Right lobe of liver (tissue), 6 donors: ENCODE measurements at regions of chr10 and their contacts with region 1.

Region 1: DNA sequence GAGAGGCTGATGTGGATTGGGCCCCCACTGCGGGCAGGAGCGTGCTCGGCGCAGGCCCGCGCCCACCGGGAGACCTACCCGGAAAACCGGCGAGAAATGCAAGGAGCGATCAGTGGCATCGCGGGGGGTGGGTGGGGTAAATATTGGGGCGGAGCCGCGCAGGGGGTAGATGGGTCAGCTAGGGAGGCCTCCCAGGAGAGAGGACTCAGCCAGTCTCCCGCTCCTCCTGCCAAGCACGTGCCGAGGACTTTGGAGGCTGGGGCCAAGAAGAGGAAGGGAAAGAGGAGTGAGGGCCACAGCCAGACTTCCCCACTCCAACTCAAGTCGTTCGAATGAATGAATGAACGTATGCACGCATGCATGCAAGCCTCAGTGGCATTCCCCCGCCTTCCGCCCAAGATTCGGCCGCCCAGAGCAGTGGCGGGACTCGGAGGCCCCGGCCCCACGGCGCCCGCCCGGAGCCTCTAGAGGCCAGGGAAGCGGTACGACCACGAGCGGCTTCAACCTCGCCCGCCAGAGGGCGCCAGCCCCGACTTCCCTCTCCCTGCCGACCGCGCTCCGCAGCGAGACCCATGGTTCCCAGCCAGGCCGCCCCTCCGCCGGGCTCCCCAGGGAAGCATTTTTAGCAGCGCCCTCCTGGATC is 3.6 kb downstream of the NPM3 start:
- DNase-seq: peak; percentile 82 to 87 (median 87)
- ATAC-seq: peak; percentile 81 to 89 (median 82)
- H3K4me3 ChIP-seq: peak overlapping the region; percentile 24 to 40 (median 38)
- H3K27ac ChIP-seq: no peak overlapping the region
- H3K4me1 ChIP-seq: peaks cover 0 to 32% (median 9%) of the 10 kb centered on the region in 4 donors
- H3K27me3 ChIP-seq: peaks cover 0 to 7% of the 10 kb centered on the region in 2 donors
- CTCF ChIP-seq: peak; percentile 64 to 94 (median 94)
- POLR2A ChIP-seq: no peak

Region 2: GRCh38 chr10:101214446-101215396 is 564.9 kb before region 1 on chr10:
- intact Hi-C with region 1: loop called in 1 of 2 experiments (anchors 10 kb)
- DNase-seq: peak in 2 of 3 donors; percentile 58 to 65
- ATAC-seq: peak; percentile 57 to 77 (median 72)
- H3K4me3 ChIP-seq: no peak overlapping the region
- H3K27ac ChIP-seq: no peak overlapping the region
- H3K4me1 ChIP-seq: peaks cover 0 to 18% (median 0%) of the 10 kb centered on the region in 4 donors
- H3K27me3 ChIP-seq: peaks cover 31 to 49% of the 10 kb centered on the region in 2 donors
- CTCF ChIP-seq: peak; percentile 55 to 90 (median 85)
- POLR2A ChIP-seq: no peak

Region 3: DNA sequence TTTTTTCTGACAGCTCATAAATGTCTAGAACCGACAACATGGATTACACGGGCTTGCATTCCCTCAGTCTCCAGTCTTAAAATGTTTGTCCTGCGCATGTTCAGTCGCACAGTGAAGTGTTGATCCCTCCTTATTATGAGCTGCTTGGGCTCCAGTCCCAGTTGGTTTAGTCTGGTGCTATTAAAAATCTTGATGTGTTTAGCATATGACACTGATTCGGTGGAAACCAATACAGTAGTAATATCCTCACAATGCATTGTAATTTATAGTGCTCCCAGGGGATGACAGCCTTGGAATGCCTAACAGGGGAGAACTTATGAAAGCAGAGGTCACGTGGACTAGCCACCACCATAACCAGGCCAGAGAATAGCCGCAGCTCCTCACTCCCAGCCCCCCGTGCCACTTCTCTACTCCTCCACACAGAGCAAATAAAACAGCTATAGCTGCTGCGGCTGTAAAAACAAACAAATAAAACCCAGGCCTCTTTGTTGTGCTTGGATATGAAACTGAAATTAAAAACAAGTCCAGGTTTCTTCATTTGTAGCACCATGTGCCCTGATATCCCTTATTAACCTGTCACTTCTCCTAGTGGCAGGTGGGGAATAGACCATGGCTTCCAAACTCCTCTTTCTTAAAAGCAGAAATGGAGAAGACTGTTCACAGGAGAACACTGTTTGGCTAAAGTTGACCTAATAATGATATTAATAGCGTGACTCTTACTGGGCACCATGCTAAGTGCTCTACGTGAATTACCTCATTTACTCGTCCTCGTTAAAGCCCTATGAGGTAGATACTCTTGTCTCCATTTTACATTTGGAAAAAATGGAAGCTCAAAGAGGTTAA is 183.9 kb before region 1 on chr10:
- intact Hi-C with region 1: loop called (anchors 5 kb)
- DNase-seq: no peak
- ATAC-seq: no peak
- H3K4me3 ChIP-seq: no peak overlapping the region
- H3K27ac ChIP-seq: no peak overlapping the region
- H3K4me1 ChIP-seq: no peaks in the 10 kb centered on the region
- H3K27me3 ChIP-seq: no peaks in the 10 kb centered on the region
- CTCF ChIP-seq: no peak
- POLR2A ChIP-seq: no peak

Region 4: DNA sequence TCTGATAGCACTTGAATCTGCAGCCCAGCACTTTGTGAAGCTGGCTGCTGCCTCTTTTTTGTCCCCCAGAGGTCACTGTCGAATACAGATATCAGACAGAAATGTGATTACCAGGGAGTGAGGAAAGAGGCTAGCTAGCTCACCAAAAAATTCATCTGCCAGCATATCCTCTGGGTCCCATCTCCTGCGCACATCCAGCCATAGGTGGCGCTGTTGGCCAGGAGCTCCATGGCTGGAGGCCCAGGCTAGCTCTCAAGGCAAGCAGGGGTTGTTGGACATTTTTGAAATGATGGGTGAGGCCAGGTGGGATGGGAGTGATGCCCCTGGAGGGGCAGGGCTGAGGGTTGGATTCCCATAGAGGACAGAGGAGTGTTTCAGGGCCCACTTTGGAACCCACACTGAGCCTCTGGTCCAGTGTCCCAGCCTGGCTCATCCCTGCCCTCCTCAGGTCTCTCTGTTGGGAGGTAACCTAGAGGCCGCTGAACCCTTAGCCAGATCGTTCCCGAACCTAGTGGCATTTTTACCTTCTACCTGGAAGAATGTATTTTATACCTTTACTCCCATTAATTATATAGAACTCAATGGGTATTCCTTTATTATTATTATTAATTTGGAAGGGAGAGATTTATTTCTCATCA is 176.8 kb before region 1 on chr10:
- intact Hi-C with region 1: loop called (anchors 5 kb)
- DNase-seq: peak; percentile 70 to 76 (median 73)
- ATAC-seq: peak; percentile 91 to 96 (median 94)
- H3K4me3 ChIP-seq: no peak overlapping the region
- H3K27ac ChIP-seq: no peak overlapping the region
- H3K4me1 ChIP-seq: no peaks in the 10 kb centered on the region
- H3K27me3 ChIP-seq: no peaks in the 10 kb centered on the region
- CTCF ChIP-seq: peak; percentile 78 to 91 (median 88)
- POLR2A ChIP-seq: no peak

Region 5: GRCh38 chr10:102064868-102065560 is 285.3 kb after region 1 on chr10 and contains the start of gene HPS6:
- intact Hi-C with region 1: no loop called
- DNase-seq: peak; percentile 95
- ATAC-seq: peak; percentile 98 to 99 (median 98)
- H3K4me3 ChIP-seq: peak within 1 kb of the TSS; percentile 94 to 100 (median 95)
- H3K27ac ChIP-seq: peak within 1 kb of the TSS; percentile 73 to 86 (median 84)
- H3K4me1 ChIP-seq: peaks cover 0 to 18% (median 4%) of the 10 kb centered on the region in 4 donors
- H3K27me3 ChIP-seq: no peaks in the 10 kb centered on the region
- CTCF ChIP-seq: peak in 3 of 4 donors; percentile 12 to 43 (median 38)
- POLR2A ChIP-seq: peak; percentile 84
- total RNA-seq, gene HPS6: 6.6 to 11.7 (median 8.4) TPM